Activated naive CD4-positive, alpha-beta T cell treated with anti-CD3 and anti-CD28 coated beads, Interleukin-2, amount 10 ng/mL, durations not matched to agents 7 days and 5 days (primary cell): ENCODE measurements at regions of chr2 and their contacts with region 1.

Region 1: DNA sequence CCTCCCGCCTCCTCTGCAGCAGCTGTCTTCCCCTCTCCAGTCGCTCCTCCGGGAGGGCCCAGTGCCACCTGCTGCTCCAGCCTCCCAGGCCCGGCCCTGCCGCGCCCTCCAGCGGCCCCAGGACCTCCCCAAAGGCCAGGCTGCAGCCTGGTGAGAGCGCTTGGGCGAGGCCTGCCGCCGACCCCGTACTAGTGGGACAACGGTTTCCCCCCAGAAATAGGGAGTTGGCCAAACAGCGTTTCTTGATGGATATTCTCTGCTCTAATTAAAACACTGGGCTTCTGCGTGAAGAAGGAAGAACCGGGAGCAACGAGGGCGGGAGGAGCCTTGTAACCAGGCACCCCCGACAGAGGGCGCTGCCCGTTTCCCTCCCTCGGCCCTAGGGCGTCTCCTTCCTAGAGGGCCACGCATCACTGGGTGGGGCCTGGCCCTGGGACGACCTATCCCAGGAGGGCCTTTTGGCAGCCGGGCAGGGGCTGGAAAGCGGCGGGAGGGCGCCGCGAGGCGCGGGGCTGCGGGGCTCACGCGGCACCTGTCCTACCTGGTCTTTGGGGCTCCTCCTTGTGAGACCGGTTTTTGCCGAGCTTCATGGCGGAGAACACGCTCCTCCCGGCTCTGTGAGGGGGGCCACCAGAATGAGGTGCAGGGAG is 25.4 kb upstream of the OTOF start:
- DNase-seq: peak; percentile 90
- H3K4me3 Mint-ChIP-seq: peak overlapping the region; percentile 57
- H3K27ac Mint-ChIP-seq: no peak overlapping the region
- H3K4me1 Mint-ChIP-seq: peaks cover 7% of the 10 kb centered on the region
- H3K27me3 Mint-ChIP-seq: peaks cover 42% of the 10 kb centered on the region

Region 2: DNA sequence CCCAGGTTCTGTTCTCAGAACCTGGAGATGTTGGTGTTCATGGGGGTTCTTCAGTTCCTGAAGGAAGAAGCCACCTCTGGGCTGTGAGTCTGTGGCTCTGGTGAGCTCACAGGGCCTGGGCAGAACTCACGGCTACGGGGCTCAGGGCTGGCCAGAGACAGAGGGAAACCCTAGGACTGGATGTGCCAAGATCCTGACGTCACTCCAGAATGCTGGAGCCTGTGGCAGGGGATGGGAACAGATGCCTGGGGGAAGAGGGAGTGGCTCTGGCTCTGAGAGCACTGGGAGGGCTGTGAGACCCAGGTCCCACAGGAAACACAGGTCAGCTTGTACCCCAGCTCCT is 25.5 kb before region 1 on chr2 and contains the start of gene OTOF:
- CTCF ChIA-PET with region 1: interaction called, 11 read pairs
- DNase-seq: no peak
- H3K4me3 Mint-ChIP-seq: peak within 1 kb of the TSS; percentile 29
- H3K27ac Mint-ChIP-seq: peak within 1 kb of the TSS; percentile 61
- H3K4me1 Mint-ChIP-seq: peaks cover 5% of the 10 kb centered on the region
- H3K27me3 Mint-ChIP-seq: peaks cover 4% of the 10 kb centered on the region

Region 3: DNA sequence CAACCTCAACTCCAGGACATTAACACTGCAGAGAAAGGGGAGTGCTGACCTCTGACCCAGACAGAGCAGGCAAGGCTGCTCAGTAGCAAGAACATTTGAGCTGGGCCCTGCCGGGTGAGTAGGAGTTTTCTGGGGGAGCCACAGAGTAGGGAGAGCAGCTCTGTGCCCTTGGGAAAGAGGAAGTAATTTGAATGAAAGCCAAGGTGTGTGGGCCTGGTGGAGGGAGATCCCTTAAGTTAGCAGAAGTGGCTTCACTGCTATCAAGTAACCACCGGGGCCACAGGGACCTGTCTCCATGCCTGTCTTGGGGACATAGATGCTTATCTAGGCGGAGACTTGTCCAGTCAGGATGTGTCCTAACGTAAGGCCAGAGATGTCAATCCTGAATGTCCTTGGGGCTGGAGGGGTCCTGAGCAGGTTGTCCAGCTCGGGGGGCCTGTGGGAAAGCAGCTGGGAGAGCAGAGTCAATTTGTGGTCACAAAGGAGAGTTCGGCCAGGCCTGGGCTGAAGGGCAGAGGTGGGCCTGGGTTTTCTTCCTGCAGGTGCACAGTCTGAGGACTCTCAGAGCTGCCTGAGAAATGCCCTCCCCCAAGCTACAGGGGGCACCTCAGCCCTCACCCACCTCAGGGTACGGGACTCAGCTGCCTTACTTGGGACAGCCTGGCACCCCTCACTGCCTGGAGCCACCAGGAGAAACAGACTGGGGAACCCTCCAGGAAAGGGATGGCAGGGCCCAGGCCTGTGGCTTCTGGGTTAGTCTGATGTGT is 10.4 kb before region 1 on chr2:
- CTCF ChIA-PET with region 1: interaction called, 14 read pairs
- DNase-seq: no peak
- H3K4me3 Mint-ChIP-seq: no peak overlapping the region
- H3K27ac Mint-ChIP-seq: no peak overlapping the region
- H3K4me1 Mint-ChIP-seq: peaks cover 2% of the 10 kb centered on the region
- H3K27me3 Mint-ChIP-seq: peaks cover under 1% of the 10 kb centered on the region

Region 4: GRCh38 chr2:26577434-26578112 is 74.2 kb after region 1 on chr2:
- CTCF ChIA-PET with region 1: interaction called, 52 read pairs
- DNase-seq: peak; percentile 70
- H3K4me3 Mint-ChIP-seq: no peak overlapping the region
- H3K27ac Mint-ChIP-seq: no peak overlapping the region
- H3K4me1 Mint-ChIP-seq: no peaks in the 10 kb centered on the region
- H3K27me3 Mint-ChIP-seq: peaks cover 55% of the 10 kb centered on the region